Activated naive CD8-positive, alpha-beta T cell treated with anti-CD3 and anti-CD28 coated beads, Interleukin-2, amount 10 ng/mL, durations not matched to agents 7 days and 5 days (primary cell): ENCODE measurements at regions of chr9 and their contacts with region 1.

Region 1: DNA sequence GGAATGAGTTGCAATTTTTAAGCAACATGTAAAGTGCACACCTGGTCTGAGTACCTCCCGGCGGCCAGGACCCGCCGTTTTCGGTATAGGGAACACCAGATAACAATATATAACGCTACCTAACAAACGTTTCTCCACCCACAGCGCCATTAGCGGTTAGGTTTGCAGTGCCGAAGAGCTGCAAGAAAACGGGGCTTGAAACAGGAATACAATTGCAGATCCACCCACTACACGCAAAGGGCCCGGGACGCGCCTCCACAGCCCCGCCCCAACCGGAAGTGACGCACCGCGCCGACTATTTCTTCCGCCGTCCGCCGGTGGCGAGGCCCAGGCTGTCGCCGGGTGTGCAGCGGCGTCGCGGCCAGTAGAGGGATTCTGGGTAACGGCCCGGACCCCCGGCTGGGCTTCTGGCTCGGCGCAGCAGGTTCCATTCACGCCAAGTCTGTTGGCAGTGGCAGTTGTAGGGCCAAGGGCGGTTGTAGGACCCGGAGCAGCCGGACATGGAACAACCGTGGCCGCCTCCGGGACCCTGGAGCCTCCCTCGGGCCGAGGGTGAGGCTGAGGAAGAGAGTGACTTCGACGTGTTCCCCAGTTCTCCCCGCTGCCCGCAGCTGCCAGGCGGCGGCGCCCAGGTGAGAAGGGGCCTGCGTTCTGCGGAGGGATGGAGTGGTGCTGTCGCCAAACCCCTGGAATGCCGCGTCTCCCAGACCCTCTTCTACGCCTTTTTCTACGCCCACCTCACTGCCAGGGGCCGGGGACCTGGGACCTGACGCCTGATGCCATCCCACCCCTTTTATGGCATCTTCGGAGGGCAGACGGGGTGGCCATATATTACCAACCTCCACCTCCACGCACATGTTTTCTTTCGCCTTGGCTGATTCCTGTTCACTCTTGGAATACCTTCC is at the start of gene CDC37L1:
- DNase-seq: peak; percentile 100
- ATAC-seq: peak; percentile 95
- H3K4me3 Mint-ChIP-seq: no peak within 1 kb of the TSS
- H3K27ac Mint-ChIP-seq: no peak within 1 kb of the TSS
- H3K4me1 Mint-ChIP-seq: peaks cover 5% of the 10 kb centered on the region
- H3K27me3 Mint-ChIP-seq: no peaks in the 10 kb centered on the region
- total RNA-seq, gene CDC37L1: 14.4 to 14.6 TPM

Region 2: DNA sequence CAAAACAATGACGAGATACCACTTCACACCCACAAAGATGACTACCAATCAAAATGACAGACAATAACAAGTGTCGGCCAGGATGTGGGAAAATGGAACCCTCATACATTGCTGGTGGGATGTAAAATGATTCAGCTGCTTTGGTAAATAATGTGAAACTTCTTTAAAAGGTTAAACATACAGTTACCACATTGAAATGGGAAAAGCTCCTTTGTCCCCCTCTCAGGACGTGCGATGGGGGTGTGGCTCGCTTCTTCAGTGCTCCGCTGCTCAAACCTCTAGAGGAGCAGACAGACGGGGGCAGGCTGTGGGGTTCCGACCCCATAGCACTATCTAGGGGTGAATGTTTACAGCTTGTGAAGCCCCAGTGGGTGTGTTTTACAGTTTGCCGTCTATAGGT is 25.4 kb before region 1 on chr9:
- POLR2A ChIA-PET with region 1: no interaction called
- DNase-seq: no peak
- ATAC-seq: no peak
- H3K4me3 Mint-ChIP-seq: no peak overlapping the region
- H3K27ac Mint-ChIP-seq: no peak overlapping the region
- H3K4me1 Mint-ChIP-seq: peaks cover 7% of the 10 kb centered on the region
- H3K27me3 Mint-ChIP-seq: peaks cover 2% of the 10 kb centered on the region

Region 3: DNA sequence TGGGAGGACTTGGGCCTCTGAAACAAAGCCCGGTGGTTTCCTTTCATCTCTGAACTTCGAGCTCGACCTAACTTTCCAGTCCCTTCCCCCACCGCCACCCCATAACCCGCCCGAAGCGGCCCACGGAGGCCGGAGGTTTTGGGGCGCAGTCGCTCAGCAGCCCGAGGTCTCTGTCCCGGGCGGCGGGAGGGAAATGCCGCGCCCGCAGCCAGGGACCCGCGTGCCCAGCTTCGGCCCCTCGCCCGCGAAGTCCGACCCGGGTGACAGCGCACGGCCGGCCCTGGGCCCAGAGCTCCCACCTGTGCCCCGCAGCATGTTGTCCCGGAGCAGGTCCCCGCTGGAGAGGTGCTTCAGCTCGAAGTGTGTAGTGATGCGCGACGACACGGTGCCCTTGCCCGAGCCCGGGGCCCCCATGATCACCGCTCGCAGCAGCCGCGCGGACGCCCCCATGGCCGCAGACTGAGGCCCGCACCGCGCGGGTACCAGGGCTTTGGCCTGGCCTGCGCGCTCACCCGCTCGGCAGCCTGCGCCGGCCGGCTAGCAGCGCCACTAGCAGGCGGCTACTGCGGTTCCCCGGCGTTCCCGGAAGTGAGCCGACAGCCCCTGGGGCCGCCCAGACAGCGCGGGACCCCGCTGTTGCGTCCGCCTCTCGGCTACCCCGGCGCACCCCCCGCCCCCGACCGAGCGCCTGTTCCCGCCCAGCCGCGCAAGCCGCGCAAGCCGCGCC is 61.3 kb after region 1 on chr9 and contains the start of gene AK3:
- POLR2A ChIA-PET with region 1: interaction called, 27 read pairs
- DNase-seq: peak; percentile 90
- ATAC-seq: peak; percentile 95
- H3K4me3 Mint-ChIP-seq: peak within 1 kb of the TSS; percentile 87
- H3K27ac Mint-ChIP-seq: peak within 1 kb of the TSS; percentile 89
- H3K4me1 Mint-ChIP-seq: peaks cover 27% of the 10 kb centered on the region
- H3K27me3 Mint-ChIP-seq: no peaks in the 10 kb centered on the region
- total RNA-seq, gene AK3: 40.1 to 41.7 TPM